ENCODE measurements at regions of chr11 and their contacts with region 1.

Region 1: GRCh38 chr11:125345421-125346178 is 150.5 kb downstream of the FEZ1 start:
- DNase-seq: peak; percentile 50
- H3K4me3 ChIP-seq: no peak overlapping the region
- H3K27ac ChIP-seq: no peak overlapping the region
- H3K27me3 ChIP-seq: no peaks in the 10 kb centered on the region
- CTCF ChIP-seq: peak; percentile 95

Region 2: GRCh38 chr11:124928942-124929665 is 416.5 kb before region 1 on chr11:
- CTCF ChIA-PET with region 1: no interaction called
- POLR2A ChIA-PET with region 1: no interaction called
- DNase-seq: no peak
- H3K4me3 ChIP-seq: no peak overlapping the region
- H3K27ac ChIP-seq: no peak overlapping the region
- H3K27me3 ChIP-seq: no peaks in the 10 kb centered on the region
- CTCF ChIP-seq: no peak

Region 3: DNA sequence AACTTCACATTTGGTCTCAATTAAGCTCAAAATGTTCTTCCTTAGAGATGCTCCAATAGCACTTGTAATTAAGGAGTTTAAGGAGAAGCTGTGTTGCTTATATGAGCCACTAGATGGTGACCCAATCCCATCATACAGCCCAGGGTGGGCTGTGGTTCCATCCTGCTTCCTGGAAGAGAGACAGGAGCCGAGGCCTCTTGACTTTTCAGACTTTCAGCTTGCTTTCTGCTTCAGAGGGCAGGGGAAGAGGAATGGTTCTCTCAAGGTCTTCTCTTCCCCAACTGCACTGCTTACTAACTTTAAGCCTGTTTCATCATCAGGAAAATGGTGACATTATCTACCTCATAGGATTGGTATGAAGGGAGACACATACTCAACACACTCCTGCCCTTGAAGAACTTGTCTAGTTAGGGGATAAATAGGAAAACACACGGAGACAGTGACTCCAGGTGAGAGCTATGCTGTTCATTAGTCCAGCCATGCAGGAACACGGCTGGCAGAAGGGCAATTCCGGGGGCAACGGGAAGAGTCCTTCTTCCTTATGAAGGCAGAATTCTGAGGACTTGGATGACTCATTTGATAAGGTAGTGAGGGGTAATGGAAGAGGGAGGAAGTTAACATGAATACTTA is 254.2 kb before region 1 on chr11:
- CTCF ChIA-PET with region 1: interaction called, 130 read pairs
- POLR2A ChIA-PET with region 1: no interaction called
- DNase-seq: peak; percentile 58
- H3K4me3 ChIP-seq: no peak overlapping the region
- H3K27ac ChIP-seq: peak overlapping the region; percentile 52
- H3K27me3 ChIP-seq: no peaks in the 10 kb centered on the region
- CTCF ChIP-seq: peak; percentile 80

Region 4: GRCh38 chr11:125148743-125149142 is 196.9 kb before region 1 on chr11:
- CTCF ChIA-PET with region 1: interaction called, 81 read pairs
- POLR2A ChIA-PET with region 1: no interaction called
- DNase-seq: no peak
- H3K4me3 ChIP-seq: no peak overlapping the region
- H3K27ac ChIP-seq: no peak overlapping the region
- H3K27me3 ChIP-seq: peaks cover 35% of the 10 kb centered on the region
- CTCF ChIP-seq: no peak

Region 5: GRCh38 chr11:125305345-125305744 is 40.3 kb before region 1 on chr11:
- CTCF ChIA-PET with region 1: interaction called, 11 read pairs
- POLR2A ChIA-PET with region 1: no interaction called
- DNase-seq: no peak
- H3K4me3 ChIP-seq: no peak overlapping the region
- H3K27ac ChIP-seq: no peak overlapping the region
- H3K27me3 ChIP-seq: peaks cover 15% of the 10 kb centered on the region
- CTCF ChIP-seq: no peak

Region 6: DNA sequence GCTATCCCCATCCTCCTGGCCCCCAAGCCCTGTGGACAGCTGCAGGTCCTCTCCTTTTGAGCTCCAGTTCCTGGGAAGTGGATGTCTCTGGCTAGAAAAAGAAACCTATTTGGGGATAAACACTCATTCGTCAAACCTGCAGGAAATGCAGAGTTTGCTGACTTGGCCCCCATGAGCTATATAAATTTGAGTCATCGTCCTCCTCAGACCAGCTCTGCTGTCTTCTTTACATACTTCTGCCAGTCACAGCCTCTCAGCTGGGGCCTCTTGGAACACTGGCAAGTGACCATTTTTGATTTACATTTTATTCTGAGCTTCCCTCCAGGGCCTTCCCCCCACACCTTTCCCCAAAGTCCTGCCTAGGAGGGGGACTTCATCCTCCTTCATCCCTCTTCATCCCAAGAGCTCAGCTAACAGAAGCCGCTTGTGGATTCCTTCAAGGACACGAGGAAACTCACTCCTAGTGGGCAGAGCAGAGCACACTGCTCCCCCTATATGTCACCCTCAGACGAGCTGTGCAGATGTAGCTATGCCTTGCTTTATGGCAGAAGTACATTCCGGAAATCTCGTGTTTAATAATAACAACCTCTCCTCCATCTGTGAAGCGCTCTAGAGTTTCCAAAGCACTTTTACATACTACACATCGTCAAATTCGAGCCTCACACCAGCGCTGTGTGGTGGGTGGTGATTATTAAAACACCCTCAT is 18.7 kb after region 1 on chr11:
- CTCF ChIA-PET with region 1: interaction called, 68 read pairs
- POLR2A ChIA-PET with region 1: no interaction called
- DNase-seq: no peak
- H3K4me3 ChIP-seq: no peak overlapping the region
- H3K27ac ChIP-seq: peak overlapping the region; percentile 22
- H3K27me3 ChIP-seq: no peaks in the 10 kb centered on the region
- CTCF ChIP-seq: peak; percentile 51

Region 7: GRCh38 chr11:125404776-125405435 is 59.3 kb after region 1 on chr11:
- CTCF ChIA-PET with region 1: interaction called, 31 read pairs
- POLR2A ChIA-PET with region 1: no interaction called
- DNase-seq: no peak
- H3K4me3 ChIP-seq: no peak overlapping the region
- H3K27ac ChIP-seq: no peak overlapping the region
- H3K27me3 ChIP-seq: peaks cover 22% of the 10 kb centered on the region
- CTCF ChIP-seq: peak; percentile 95